ENCODE measurements at regions of chr15 and their contacts with region 1.

Region 1: DNA sequence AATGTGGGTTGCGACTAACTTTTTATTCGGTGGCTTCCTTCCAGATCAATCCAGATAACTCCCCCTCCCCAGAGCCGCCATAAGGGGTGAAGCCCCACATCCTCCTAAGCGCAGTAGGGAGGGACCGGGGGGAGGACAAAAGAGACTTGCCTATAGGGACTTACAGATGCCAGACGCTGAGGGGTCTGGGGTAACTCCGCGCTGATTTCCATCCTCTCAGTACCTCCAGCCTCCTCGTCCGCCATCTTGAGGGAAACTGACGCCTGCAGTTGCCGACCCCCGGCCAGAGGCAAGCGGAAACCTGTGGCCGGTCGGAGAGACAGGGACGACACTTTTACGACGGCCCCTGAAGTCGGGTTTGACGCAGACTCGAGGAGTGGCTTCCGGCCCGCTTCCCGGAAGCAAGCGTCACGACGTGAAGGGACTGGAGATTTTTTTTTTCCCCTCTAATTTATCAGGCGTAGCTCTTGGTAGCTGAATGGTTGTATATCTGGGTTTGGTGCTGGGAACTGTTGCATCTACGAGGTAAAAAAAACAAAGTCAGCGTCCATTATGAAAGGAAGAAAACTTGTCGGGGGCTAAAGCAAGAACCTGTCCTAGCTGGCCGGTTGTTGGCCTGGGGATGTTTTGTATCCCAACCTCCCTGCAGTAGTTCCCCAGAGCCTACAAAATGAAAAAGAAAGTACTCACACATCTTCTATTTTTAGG is at the start of gene UBR1:
- DNase-seq: peak; percentile 82
- ATAC-seq: peak; percentile 97
- H3K4me3 ChIP-seq: peak within 1 kb of the TSS; percentile 89 to 99 (median 89)
- H3K27ac ChIP-seq: peak within 1 kb of the TSS; percentile 76
- H3K4me1 ChIP-seq: peaks cover 15% of the 10 kb centered on the region
- H3K27me3 ChIP-seq: no peaks in the 10 kb centered on the region; a peak in 1 of 5 replicates
- CTCF ChIP-seq: 0 out of 2 replicates have a peak, but pooled peaks have one; percentile 5
- EP300 ChIP-seq: no peak
- POLR2A ChIP-seq: peak; percentile 73 to 81
- RAD21 ChIP-seq: no peak
- total RNA-seq, gene UBR1: 18.0 and 21.7 TPM in 2 replicates

Region 2: DNA sequence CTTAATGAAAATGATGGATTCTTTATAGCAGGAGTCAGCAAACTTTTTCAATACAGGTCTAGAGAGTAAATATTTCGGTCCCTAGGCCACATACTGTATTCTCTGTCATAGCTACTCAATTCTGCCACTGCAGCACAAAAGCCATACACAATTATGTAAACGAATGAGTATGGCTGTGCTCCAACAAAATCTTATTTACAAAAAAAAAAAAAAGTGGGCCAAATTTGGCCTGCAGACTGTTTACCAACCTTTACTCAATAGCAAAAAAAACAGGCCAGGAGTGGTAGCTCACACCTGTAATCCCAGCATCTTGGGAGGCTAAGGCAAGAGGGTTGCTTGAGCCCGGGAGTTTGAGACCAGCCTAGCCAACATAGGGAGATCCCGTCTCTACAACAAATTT is 226.5 kb before region 1 on chr15:
- CTCF ChIA-PET with region 1: no interaction called
- POLR2A ChIA-PET with region 1: no interaction called
- in situ Hi-C with region 1: no loop called
- intact Hi-C with region 1: no loop called
- DNase-seq: no peak
- ATAC-seq: no peak
- H3K4me3 ChIP-seq: no peak overlapping the region
- H3K27ac ChIP-seq: no peak overlapping the region
- H3K4me1 ChIP-seq: no peaks in the 10 kb centered on the region; the same call in 1 of the 2 replicates
- H3K27me3 ChIP-seq: no peaks in the 10 kb centered on the region
- CTCF ChIP-seq: no peak
- EP300 ChIP-seq: no peak
- POLR2A ChIP-seq: no peak
- RAD21 ChIP-seq: no peak

Region 3: DNA sequence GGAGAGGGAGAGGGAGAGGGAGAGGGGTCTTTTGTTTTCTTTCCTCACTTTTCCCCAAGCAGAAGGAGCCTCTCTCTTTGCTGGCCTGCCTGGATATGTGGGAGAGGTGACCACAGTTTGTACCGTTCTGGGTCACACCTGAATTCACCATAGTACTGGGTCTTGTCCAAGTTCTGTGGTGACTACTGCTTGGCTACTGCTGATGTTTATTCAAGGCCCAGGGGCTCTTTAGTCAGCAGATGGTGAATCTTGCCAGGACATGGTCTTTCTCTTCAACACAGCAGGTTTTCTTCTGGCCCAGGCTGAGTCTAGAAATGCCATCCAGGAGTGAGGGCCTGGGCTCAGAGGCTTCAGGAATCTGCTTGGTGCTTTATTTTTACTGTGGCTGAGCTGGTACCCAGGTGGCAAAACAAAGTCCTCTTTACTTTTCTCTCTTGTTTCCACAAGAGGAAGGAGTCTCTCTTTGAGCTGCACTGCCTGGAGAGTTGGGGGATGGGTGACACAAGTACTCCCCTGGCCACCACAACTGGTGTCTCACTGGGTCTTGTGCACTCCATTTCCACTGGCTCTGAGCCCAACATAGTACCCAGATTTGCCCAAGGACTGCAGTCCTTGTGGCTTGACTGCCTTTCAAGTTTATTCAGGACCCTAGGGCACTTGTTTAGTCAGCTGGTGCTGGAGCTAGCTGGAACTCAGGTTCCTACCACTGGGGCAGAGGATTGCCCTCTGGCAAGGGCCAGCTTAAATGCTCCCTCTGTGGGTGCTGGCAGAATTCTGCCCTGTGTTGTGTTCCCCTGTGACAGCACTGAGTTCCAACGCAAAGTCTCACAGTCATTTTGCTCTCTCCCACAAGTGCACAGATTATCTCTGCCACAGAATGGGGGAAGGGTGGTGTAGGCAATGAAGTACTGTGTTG is 62.5 kb after region 1 on chr15:
- CTCF ChIA-PET with region 1: no interaction called
- POLR2A ChIA-PET with region 1: no interaction called
- in situ Hi-C with region 1: no loop called
- intact Hi-C with region 1: no loop called
- DNase-seq: no peak
- ATAC-seq: no peak; the same call in 2 of the 3 replicates
- H3K4me3 ChIP-seq: no peak overlapping the region
- H3K27ac ChIP-seq: no peak overlapping the region
- H3K4me1 ChIP-seq: no peaks in the 10 kb centered on the region
- H3K27me3 ChIP-seq: no peaks in the 10 kb centered on the region
- CTCF ChIP-seq: no peak
- EP300 ChIP-seq: no peak
- POLR2A ChIP-seq: no peak
- RAD21 ChIP-seq: no peak

Region 4: DNA sequence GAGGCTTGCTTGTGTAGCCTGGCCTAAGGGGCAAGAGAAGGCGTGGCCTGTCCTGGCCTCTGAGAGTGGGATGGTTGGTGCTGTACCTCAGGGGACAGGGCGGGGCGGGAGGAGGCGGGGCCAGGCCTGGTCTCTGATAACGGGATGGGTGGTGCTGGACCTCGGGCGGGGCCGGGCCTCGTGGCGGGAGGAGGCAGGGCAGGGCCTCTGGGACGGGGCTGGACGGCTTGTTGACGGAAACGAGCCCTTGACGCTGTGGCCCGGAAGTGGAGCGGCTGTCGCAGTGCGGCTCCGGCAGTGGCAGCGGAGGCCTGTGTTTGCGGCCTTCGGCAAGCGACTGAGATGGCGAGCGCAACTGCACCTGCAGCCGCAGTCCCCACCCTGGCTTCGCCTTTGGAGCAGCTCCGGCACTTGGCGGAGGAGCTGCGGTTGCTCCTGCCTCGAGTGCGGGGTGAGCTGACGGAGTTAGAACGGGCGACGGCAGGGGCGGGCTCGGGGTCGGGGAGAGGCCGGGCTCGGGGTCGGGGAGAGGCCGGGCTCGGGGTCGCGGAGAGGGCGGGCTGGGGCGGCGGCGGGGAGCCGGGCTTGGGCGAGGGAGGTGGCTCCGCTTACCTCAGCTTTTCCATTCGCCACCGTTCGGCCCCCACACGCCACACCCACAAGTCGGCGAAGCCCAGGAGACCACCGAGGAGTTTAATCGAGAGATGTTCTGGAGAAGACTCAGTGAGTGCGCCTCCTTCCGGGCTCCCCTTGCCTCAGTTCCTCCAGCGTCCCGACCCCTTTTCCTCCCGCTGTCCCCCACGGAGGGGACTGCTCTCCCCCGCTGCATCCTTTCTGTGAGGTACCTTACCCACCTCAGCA is 79.5 kb after region 1 on chr15 and contains the start of gene CCNDBP1:
- CTCF ChIA-PET with region 1: no interaction called
- POLR2A ChIA-PET with region 1: no interaction called
- in situ Hi-C with region 1: no loop called
- intact Hi-C with region 1: loop called (anchors 5 kb)
- DNase-seq: peak; percentile 88
- ATAC-seq: peak; percentile 98
- H3K4me3 ChIP-seq: peak within 1 kb of the TSS; percentile 86 to 89 (median 87)
- H3K27ac ChIP-seq: peak within 1 kb of the TSS; percentile 77
- H3K4me1 ChIP-seq: peaks cover 10% of the 10 kb centered on the region
- H3K27me3 ChIP-seq: no peaks in the 10 kb centered on the region
- CTCF ChIP-seq: peak; percentile 51
- EP300 ChIP-seq: no peak
- POLR2A ChIP-seq: peak; percentile 91 to 92
- RAD21 ChIP-seq: no peak
- total RNA-seq, gene CCNDBP1: 24.8 and 33.1 TPM in 2 replicates

Measured in HepG2 (cell line).